Calu3 (cell line): ENCODE measurements at regions of chr5 and their contacts with region 1.

Region 1: DNA sequence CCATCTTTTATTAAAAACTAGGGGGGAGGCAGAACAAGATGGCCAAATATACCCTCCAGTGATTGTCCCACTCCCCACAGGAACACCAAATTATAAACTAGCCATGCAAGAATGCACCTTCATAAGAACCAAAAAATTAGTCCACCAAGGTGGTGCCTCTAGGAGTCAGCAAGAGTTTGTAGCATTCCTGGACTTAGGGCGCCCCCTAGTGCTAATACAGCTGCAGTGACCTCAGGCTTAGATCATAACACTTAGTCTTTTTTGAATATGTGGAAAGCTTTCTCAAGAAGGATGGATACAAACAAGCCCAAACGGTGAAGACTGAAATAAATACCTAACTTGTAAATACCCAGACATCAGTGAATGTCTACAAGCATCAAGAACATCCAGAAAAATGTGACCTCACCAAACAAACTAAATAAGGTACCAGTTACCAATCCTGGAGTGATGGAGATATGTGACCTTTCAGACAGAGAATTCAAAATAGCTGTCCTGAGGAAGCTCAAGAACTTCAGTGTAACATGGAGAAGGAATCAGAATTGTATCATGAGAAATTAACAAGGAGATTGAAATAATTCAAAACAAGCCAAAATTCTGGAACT is 19.3 kb downstream of the PPIP5K2 start:
- DNase-seq: peak; percentile 88
- H3K4me3 Mint-ChIP-seq: no peak overlapping the region
- H3K27ac Mint-ChIP-seq: no peak overlapping the region
- H3K4me1 Mint-ChIP-seq: no peaks in the 10 kb centered on the region
- H3K27me3 Mint-ChIP-seq: no peaks in the 10 kb centered on the region
- CTCF ChIP-seq: peak; percentile 97

Region 2: GRCh38 chr5:102536323-102536928 is 602.9 kb before region 1 on chr5:
- CTCF ChIA-PET with region 1: no interaction called
- intact Hi-C with region 1: loop called (anchors 10 kb)
- DNase-seq: no peak
- H3K4me3 Mint-ChIP-seq: no peak overlapping the region
- H3K27ac Mint-ChIP-seq: no peak overlapping the region
- H3K4me1 Mint-ChIP-seq: no peaks in the 10 kb centered on the region
- H3K27me3 Mint-ChIP-seq: no peaks in the 10 kb centered on the region
- CTCF ChIP-seq: peak; percentile 39

Region 3: GRCh38 chr5:102681407-102681983 is 457.9 kb before region 1 on chr5:
- CTCF ChIA-PET with region 1: interaction called, 4 read pairs
- intact Hi-C with region 1: loop called (anchors 1 kb)
- DNase-seq: peak; percentile 87
- H3K4me3 Mint-ChIP-seq: no peak overlapping the region
- H3K27ac Mint-ChIP-seq: no peak overlapping the region
- H3K4me1 Mint-ChIP-seq: no peaks in the 10 kb centered on the region
- H3K27me3 Mint-ChIP-seq: peaks cover 12% of the 10 kb centered on the region
- CTCF ChIP-seq: peak; percentile 91

Region 4: DNA sequence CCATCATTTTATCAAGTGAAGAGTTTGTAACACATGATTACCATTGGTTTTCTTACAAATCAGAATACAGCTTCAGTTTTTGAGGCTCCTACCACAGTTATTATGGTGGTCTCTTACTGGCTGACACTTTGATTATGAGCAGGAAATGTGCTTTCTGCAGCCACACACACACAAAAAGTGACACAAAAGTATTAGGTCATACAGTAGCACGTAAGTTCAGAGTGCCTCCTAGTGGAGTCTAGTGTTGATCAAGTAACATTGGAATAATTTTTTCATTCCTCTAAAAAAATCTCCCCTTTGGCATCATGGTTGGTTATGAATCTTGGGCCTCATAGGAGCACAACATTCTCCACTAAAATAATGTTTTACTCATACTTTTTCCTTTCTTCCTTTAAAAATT is 346.7 kb before region 1 on chr5:
- CTCF ChIA-PET with region 1: no interaction called
- intact Hi-C with region 1: loop called (anchors 5 kb)
- DNase-seq: peak; percentile 15
- H3K4me3 Mint-ChIP-seq: no peak overlapping the region
- H3K27ac Mint-ChIP-seq: no peak overlapping the region
- H3K4me1 Mint-ChIP-seq: peaks cover 8% of the 10 kb centered on the region
- H3K27me3 Mint-ChIP-seq: no peaks in the 10 kb centered on the region
- CTCF ChIP-seq: peak; percentile 19

Region 5: DNA sequence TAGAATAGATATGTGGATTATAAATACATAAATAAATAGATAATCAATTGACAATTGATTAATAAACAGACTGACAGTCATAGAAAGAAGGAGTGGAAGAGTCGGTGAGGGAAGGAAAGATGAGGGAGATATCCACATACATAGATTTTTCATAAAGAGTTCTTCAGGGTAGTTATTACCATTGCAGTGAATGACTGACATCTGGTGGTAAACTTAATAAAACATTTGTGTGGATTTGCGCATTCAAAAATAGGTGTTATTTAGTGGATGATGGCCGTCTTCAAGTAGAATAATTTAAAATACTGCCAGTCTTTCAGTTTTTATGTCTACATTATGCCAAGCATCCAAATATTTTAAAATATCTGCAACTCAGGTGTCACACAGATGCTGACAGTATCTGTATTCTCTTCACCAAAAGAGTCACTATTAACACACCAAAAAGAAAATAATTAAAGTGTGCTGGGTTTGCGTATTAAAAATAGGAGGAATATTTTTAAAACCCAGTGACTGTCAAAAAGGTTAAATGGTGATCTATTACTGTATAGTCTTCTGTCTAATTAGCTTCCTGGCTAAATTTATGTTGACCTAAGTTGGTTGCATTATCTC is 98.2 kb before region 1 on chr5:
- CTCF ChIA-PET with region 1: no interaction called
- intact Hi-C with region 1: loop called (anchors 2 kb)
- DNase-seq: no peak
- H3K4me3 Mint-ChIP-seq: no peak overlapping the region
- H3K27ac Mint-ChIP-seq: no peak overlapping the region
- H3K4me1 Mint-ChIP-seq: no peaks in the 10 kb centered on the region
- H3K27me3 Mint-ChIP-seq: no peaks in the 10 kb centered on the region
- CTCF ChIP-seq: peak; percentile 48